Psoas muscle (tissue), 8 donors: ENCODE measurements at regions of chr11 and their contacts with region 1.

Region 1: DNA sequence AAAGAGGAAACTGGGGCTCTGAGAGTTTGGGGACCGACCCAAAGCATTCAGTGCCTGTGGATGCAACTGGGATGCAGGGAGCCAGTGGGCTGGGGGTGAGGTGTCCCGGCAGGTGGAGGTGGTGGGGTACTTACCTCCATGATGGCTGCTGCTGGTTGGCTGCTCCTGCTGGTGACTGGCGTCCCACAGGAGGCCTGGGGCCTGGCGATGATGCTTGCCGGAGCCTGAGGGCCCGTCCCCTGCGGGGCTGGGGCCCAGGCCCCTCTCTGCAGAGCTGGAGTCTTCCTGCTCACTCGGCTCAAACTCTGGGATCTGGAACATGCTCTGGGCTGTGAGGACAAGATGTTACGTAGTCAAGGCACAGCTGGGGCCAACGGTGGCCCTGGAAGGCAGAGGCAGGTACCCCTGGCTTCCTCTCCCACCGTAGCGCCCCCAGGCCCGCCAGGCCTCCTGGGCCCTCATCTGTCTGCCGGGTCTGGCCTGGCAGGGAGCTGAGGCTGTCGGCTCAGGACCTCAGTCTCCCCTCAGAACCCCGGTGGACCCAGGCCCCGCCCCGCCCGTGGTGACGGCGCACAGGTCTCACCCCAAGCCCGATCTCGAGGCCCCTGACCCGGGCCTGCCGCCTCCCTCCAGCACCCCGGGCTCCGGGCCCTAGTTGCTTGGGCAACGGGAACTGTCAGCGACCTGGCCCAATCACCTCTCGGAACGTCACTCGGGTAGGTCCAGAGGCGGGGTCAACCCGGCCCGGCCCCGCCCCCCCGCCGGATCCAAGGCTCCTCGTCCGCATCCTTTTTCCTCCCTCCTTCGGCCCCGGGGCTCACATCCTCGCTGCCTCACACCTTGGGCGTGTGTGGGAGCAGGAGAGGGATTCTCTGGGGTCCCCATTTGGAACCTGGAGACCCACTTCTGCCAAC is at the start of gene BAD:
- DNase-seq: peak; percentile 95 to 97
- ATAC-seq: peak; percentile 87 to 93 (median 91)
- H3K4me3 ChIP-seq: peak within 1 kb of the TSS; percentile 79
- H3K27ac ChIP-seq: peak within 1 kb of the TSS; percentile 93
- H3K4me1 ChIP-seq: peaks cover 25% of the 10 kb centered on the region
- H3K27me3 ChIP-seq: no peaks in the 10 kb centered on the region
- CTCF ChIP-seq: no peak
- total RNA-seq, gene BAD: 29.8 to 32.6 (median 30.4) TPM

Region 2: DNA sequence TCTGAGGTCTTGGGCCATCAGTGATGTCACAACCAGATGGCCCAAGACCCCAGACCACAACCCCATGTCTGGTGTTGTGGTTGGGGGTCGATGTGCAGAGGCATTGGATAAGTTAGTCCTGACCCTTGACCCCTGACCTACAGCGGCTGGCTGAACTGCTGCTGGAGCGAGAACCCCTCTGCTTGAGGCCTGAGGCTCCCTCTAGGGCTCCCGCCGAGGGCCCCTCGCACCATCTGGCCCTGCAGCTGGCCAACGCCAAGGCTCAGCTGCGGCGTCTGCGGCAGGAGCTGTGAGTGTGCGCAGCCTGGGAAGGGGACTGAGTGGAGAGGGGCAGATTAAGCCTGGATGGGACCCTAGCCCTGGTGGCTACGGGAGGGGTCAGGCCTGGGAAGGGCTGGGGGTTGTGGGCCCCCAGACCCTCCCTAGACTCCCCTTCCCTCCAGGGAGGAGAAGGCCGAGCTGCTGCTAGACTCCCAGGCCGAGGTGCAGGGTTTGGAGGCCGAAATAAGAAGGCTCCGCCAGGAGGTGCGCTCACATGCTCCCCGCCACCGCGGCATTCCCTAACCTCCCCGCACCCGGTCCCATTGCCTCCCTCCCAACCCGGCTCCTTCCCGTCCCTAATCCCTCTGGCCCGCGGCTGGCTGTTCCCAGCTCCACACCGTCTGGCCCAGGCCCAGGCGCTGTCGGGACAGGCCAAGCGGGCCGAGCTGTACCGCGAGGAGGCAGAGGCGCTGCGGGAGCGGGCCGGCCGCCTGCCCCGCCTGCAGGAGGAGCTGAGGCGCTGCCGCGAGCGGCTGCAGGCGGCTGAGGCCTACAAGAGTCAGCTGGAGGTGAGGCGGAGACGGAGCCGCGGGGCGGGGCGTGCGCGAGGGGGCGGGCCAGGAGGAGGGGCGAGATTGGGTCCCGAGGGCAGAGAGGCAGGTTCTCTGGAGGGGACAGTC is 57.8 kb after region 1 on chr11:
- intact Hi-C with region 1: loop called in 1 of 2 experiments (anchors 2 kb)
- DNase-seq: peak; percentile 91 to 95
- ATAC-seq: peak; percentile 93 to 97 (median 95)
- H3K4me3 ChIP-seq: peak overlapping the region; percentile 64
- H3K27ac ChIP-seq: peak overlapping the region; percentile 85
- H3K4me1 ChIP-seq: peaks cover 5% of the 10 kb centered on the region
- H3K27me3 ChIP-seq: no peaks in the 10 kb centered on the region
- CTCF ChIP-seq: peak; percentile 51